ENCODE measurements at regions of chr15 and their contacts with region 1.

Region 1: GRCh38 chr15:43285609-43286037 is 18.9 kb upstream of the TGM5 start:
- DNase-seq: peak; percentile 77
- H3K4me3 Mint-ChIP-seq: no peak overlapping the region
- H3K27ac Mint-ChIP-seq: no peak overlapping the region
- H3K4me1 Mint-ChIP-seq: peaks cover 5% of the 10 kb centered on the region
- H3K27me3 Mint-ChIP-seq: peaks cover 22% of the 10 kb centered on the region
- CTCF ChIP-seq: peak; percentile 88

Region 2: GRCh38 chr15:42704492-42704926 is 581.1 kb before region 1 on chr15:
- CTCF ChIA-PET with region 1: no interaction called
- POLR2A ChIA-PET with region 1: no interaction called
- intact Hi-C with region 1: loop called (anchors 1 kb)
- DNase-seq: peak; percentile 83
- H3K4me3 Mint-ChIP-seq: no peak overlapping the region
- H3K27ac Mint-ChIP-seq: no peak overlapping the region
- H3K4me1 Mint-ChIP-seq: peaks cover 6% of the 10 kb centered on the region
- H3K27me3 Mint-ChIP-seq: no peaks in the 10 kb centered on the region
- CTCF ChIP-seq: peak; percentile 88

Region 3: DNA sequence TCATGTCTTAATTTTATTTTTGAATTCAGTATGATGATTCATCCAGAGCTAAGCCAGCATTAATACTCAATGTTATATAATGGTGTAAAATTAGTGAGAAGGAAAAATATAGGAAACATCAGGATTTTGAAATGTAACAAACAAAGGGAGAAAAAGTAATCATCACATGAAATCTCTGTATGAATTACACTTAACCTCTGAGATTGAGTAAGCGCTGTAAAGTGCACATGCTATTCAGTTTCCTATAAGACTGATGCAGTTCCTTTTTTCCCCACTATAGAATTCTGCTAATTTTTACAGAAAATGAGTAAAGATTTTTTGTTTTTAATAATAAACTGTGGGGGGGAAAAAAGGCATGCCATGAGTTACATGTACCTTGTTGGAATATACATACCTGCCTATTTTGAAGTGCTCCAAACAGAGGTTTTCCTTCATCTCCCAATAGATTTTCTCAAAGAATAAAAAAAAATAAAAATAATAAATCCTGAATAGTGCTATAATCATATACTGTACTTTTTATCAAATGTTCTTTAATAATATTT is 301.1 kb before region 1 on chr15:
- CTCF ChIA-PET with region 1: no interaction called
- POLR2A ChIA-PET with region 1: no interaction called
- intact Hi-C with region 1: no loop called
- DNase-seq: no peak
- H3K4me3 Mint-ChIP-seq: no peak overlapping the region
- H3K27ac Mint-ChIP-seq: no peak overlapping the region
- H3K4me1 Mint-ChIP-seq: no peaks in the 10 kb centered on the region
- H3K27me3 Mint-ChIP-seq: no peaks in the 10 kb centered on the region
- CTCF ChIP-seq: no peak

Region 4: GRCh38 chr15:43204016-43204901 is 81.4 kb before region 1 on chr15:
- CTCF ChIA-PET with region 1: interaction called, 19 read pairs
- POLR2A ChIA-PET with region 1: interaction called, 4 read pairs
- intact Hi-C with region 1: loop called (anchors 1 kb)
- DNase-seq: peak; percentile 69
- H3K4me3 Mint-ChIP-seq: no peak overlapping the region
- H3K27ac Mint-ChIP-seq: peak overlapping the region; percentile 17
- H3K4me1 Mint-ChIP-seq: peaks cover 11% of the 10 kb centered on the region
- H3K27me3 Mint-ChIP-seq: no peaks in the 10 kb centered on the region
- CTCF ChIP-seq: peak; percentile 39

Region 5: DNA sequence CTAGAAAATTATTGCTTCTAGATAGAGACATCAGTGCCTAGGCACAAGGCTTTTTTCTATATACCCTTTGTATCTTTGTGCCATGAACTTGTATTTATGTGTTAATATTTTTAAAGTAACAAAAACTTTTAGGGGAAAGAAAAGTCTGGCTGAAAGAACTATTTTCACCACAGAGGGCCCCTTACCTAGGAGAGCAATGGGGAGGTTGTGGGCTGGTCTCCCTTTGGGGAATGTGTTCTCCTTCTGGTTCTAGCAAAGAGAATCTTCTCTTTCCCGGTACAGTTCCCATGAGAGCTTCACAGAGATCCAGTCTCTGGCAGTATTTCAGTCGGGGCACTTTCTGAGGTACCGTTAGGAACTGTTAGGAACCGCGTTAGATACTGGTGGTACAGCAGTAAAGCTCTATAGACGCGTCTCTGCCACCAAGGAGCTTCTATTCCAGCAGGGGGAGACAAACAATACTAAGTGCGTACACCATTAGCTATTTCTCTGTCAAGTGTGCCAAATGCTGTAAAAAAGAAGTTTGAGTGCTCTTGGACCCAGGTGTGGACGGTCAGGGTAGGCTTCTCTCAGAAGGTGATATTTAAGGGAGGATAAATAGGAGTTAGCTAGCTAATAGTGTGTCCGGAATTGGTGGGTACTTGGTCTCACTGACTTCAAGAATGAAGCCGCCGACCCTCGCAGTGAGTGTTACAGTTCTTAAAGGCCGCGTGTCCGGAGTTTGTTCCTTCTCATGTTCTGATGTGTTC is 60.2 kb before region 1 on chr15:
- CTCF ChIA-PET with region 1: interaction called, 222 read pairs
- POLR2A ChIA-PET with region 1: interaction called, 32 read pairs
- intact Hi-C with region 1: loop called (anchors 1 kb)
- DNase-seq: peak; percentile 77
- H3K4me3 Mint-ChIP-seq: no peak overlapping the region
- H3K27ac Mint-ChIP-seq: no peak overlapping the region
- H3K4me1 Mint-ChIP-seq: peaks cover under 1% of the 10 kb centered on the region
- H3K27me3 Mint-ChIP-seq: no peaks in the 10 kb centered on the region
- CTCF ChIP-seq: peak; percentile 75

Region 6: DNA sequence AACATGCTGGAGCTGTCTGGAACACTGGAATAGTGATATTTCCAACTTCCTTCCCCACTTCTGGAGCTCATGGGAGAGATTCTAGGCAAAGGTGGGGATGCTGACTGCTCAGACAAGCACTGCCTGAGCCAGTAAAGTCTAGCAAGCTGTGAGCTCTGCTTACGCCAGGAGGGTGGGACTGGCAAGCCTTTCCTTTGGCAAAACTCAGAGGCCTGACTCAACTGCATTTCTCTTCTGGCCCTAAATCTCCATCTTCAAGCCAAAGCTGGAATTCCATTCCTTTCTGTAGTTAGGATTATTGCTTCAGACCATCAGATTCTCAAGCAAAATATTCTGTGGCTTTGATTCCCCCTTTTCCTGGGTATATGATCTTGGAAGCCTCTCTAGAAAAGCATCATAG is 44.5 kb before region 1 on chr15:
- CTCF ChIA-PET with region 1: interaction called, 10 read pairs
- POLR2A ChIA-PET with region 1: no interaction called
- intact Hi-C with region 1: no loop called
- DNase-seq: no peak
- H3K4me3 Mint-ChIP-seq: no peak overlapping the region
- H3K27ac Mint-ChIP-seq: no peak overlapping the region
- H3K4me1 Mint-ChIP-seq: no peaks in the 10 kb centered on the region
- H3K27me3 Mint-ChIP-seq: peaks cover 3% of the 10 kb centered on the region
- CTCF ChIP-seq: no peak

Region 7: GRCh38 chr15:43268111-43269105 is 17.2 kb before region 1 on chr15:
- CTCF ChIA-PET with region 1: interaction called, 37 read pairs
- POLR2A ChIA-PET with region 1: interaction called, 4 read pairs
- intact Hi-C with region 1: no loop called
- DNase-seq: peak; percentile 40
- H3K4me3 Mint-ChIP-seq: no peak overlapping the region
- H3K27ac Mint-ChIP-seq: no peak overlapping the region
- H3K4me1 Mint-ChIP-seq: peaks cover 16% of the 10 kb centered on the region
- H3K27me3 Mint-ChIP-seq: peaks cover 32% of the 10 kb centered on the region
- CTCF ChIP-seq: peak; percentile 14